Right lobe of liver (tissue), 6 donors: ENCODE measurements at regions of chr19 and their contacts with region 1.

Region 1: DNA sequence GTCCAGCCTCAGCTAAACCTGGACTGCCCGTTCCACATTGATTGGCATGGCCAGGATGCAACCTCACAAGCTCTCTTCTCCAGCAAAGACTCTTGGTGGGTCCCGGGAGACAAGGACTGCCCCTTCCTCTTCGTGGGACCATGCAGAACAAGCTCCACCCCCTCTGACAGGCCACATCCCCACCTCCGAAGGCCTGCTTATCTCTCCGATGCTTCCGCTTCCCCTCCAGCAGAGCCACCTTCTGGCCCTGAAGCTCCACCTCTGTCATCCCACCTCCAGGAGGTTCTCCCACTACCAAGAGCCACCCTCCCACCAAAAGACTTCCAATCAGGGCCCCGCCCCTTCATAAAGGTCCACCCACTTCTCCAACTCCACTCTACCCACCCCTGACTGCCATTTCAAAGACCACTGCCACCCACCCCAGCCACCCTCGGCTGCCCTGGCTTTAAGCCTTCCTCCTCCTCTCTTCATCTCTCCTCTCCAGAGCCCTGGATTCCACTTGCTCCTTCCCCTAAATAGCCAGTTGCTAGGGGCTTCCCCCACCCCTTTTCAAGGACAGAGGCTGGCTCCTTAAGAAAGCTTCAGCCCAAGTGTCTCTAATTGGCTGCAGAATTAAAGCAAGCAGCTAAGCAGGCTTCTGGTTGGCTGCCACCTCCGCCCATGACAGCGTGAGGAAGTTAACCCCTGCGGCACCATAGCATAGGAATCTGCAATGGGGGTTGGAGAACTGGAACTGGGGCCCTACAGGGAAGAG is 9.9 kb downstream of the LRFN1 start:
- DNase-seq: no peak
- ATAC-seq: no peak
- H3K4me3 ChIP-seq: no peak overlapping the region
- H3K27ac ChIP-seq: no peak overlapping the region
- H3K4me1 ChIP-seq: peaks cover 0 to 5% (median 0%) of the 10 kb centered on the region in 4 donors
- H3K27me3 ChIP-seq: peaks cover 4 to 12% of the 10 kb centered on the region in 2 donors
- CTCF ChIP-seq: no peak
- POLR2A ChIP-seq: no peak

Region 2: DNA sequence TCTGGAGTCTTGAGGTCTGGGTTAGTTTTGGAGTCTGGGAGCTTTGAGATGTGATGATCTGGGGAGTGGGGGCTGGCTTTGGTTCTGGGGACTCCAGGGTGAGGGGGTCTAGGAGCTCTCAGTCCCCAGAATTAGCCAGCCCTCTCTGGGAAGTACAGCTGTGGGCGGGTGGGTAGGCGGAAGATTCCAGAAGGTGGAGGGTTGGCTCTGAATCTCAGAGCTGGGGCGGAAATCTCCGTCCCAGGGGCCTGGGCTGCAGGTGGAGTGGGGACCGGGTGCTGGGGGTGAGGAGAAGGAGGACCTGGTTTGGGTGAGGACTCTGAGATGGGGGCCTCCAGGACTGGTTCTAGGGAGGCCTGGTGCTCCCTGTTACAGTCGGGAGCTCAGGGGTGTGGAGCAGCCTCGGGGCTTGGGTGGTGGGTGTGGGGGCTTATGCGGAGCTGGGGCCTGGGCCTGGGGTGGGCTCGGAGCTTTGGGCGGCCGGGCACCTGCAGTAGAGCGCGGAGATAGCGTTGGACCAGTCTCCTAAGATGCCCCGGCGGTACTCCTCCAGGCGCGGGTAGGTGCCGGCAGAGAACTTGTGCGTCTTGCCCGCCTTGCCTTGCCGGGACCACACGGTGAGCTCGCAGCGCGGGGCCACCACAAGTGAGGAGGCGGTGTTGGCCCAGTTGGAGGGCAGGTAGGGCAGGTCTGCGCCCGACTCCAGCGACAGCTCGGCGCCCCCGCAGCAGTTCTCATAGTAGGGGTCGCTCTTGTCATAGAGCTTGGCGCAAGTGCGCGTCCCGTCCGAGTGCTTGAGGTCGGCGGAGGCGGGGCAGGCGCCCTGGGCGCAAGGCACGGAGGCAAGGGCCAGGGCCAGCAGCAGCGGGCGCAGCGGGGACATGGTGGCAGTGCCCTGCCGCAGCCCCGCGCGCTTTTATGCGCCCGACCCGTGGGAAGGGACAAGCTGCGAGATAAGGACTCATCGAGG is 107.1 kb before region 1 on chr19 and contains the start of gene SYCN:
- intact Hi-C with region 1: loop called in 1 of 2 experiments (anchors 10 kb)
- DNase-seq: no peak
- ATAC-seq: no peak
- H3K4me3 ChIP-seq: no peak within 1 kb of the TSS
- H3K27ac ChIP-seq: no peak within 1 kb of the TSS
- H3K4me1 ChIP-seq: no peaks in the 10 kb centered on the region
- H3K27me3 ChIP-seq: peaks cover 0 to 5% of the 10 kb centered on the region in 2 donors
- CTCF ChIP-seq: no peak
- POLR2A ChIP-seq: no peak
- total RNA-seq, gene SYCN: not detected

Region 3: GRCh38 chr19:39474139-39474622 is 163.4 kb after region 1 on chr19:
- intact Hi-C with region 1: no loop called
- DNase-seq: peak in 2 of 3 donors; percentile 52 to 67
- ATAC-seq: peak; percentile 52 to 68 (median 64)
- H3K4me3 ChIP-seq: no peak overlapping the region
- H3K27ac ChIP-seq: no peak overlapping the region
- H3K4me1 ChIP-seq: no peaks in the 10 kb centered on the region
- H3K27me3 ChIP-seq: no peaks in the 10 kb centered on the region
- CTCF ChIP-seq: peak; percentile 58 to 61 (median 59)
- POLR2A ChIP-seq: no peak